ENCODE measurements at regions of chr17 and their contacts with region 1.

Region 1: DNA sequence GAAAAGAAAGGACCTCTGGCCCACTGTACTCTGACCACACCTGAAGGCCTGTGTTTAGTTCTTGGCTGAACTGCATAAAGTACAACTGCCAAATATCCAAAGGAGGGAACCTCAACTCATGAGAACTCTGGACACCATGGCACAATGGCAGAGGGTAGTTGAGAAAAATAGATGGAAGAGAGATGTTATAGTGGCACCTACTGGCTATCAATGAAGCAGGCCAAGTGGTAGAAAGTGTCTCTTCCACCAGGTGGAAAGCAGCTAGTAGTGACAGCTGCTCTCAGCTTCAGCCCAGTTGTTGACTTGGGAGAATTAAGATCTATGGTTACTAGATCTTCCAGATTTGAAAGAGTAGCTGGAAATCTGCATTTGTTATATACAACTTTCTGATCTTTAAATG is 3.2 kb downstream of the MED31 start:
- DNase-seq: peak in 2 of 3 donors; percentile 63
- H3K4me3 ChIP-seq: no peak overlapping the region
- H3K27ac ChIP-seq: no peak overlapping the region
- H3K4me1 ChIP-seq: peaks cover 13 to 28% (median 24%) of the 10 kb centered on the region in 4 experiments
- H3K27me3 ChIP-seq: peaks cover 0 to 6% (median 0%) of the 10 kb centered on the region in 5 experiments

Region 2: DNA sequence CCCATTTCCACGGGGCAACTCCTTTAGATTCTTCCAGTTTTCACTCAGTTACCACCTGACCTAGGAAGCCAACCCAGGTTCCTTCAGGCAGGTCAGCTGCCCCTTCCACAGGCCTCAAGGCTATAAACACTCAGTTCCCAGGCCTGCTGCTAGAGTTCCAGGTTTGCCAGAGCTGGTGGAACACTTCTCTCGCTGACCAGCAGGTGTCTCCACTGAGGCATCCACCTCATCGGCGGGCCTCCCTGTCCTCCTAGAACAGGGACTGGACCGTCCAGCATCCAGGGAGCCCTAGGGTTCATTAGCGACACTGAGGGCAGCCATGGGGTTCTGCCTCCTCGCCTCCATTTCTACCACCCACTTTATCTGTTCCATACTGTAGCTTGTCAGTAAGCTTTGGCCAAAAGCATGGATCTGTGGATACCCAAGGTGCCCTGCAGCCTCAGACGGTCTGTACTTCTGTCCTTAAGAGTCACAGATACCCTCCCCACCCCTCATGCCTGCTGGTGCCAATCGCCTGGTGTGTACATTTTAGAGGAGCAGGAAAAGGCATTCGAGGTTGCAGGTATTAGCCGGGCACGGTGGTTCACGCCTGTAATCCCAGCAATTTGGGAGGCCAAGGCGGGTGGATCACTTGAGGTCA is 174.9 kb before region 1 on chr17:
- CTCF ChIA-PET with region 1: interaction called, 14 read pairs
- POLR2A ChIA-PET with region 1: interaction called, 3 read pairs
- DNase-seq: peak; percentile 43 to 66 (median 59)
- H3K4me3 ChIP-seq: no peak overlapping the region
- H3K27ac ChIP-seq: no peak overlapping the region
- H3K4me1 ChIP-seq: no peaks in the 10 kb centered on the region
- H3K27me3 ChIP-seq: peaks cover 0 to 6% (median 0%) of the 10 kb centered on the region in 5 experiments

Region 3: GRCh38 chr17:6660805-6661463 is 12.8 kb after region 1 on chr17:
- CTCF ChIA-PET with region 1: interaction called, 12 read pairs
- POLR2A ChIA-PET with region 1: no interaction called
- DNase-seq: peak; percentile 54 to 92 (median 89)
- H3K4me3 ChIP-seq: peak overlapping the region in 6 of 7 experiments; percentile 1 to 28 (median 16)
- H3K27ac ChIP-seq: no peak overlapping the region
- H3K4me1 ChIP-seq: peaks cover 6 to 40% (median 30%) of the 10 kb centered on the region in 4 experiments
- H3K27me3 ChIP-seq: peaks cover 0 to 15% (median 4%) of the 10 kb centered on the region in 5 experiments